Ovary (tissue), 10 donors: ENCODE measurements at regions of chr6 and their contacts with region 1.

Region 1: GRCh38 chr6:16228709-16229665 is 9.4 kb upstream of the GMPR start:
- DNase-seq: peak in 1 of 5 donors; percentile 43
- H3K4me3 ChIP-seq: peak overlapping the region; percentile 15
- H3K27ac ChIP-seq: peak overlapping the region; percentile 31 to 48
- H3K4me1 ChIP-seq: peaks cover 4% of the 10 kb centered on the region
- H3K27me3 ChIP-seq: no peaks in the 10 kb centered on the region
- CTCF ChIP-seq: no peak
- EP300 ChIP-seq: no peak
- POLR2A ChIP-seq: no peak

Region 2: DNA sequence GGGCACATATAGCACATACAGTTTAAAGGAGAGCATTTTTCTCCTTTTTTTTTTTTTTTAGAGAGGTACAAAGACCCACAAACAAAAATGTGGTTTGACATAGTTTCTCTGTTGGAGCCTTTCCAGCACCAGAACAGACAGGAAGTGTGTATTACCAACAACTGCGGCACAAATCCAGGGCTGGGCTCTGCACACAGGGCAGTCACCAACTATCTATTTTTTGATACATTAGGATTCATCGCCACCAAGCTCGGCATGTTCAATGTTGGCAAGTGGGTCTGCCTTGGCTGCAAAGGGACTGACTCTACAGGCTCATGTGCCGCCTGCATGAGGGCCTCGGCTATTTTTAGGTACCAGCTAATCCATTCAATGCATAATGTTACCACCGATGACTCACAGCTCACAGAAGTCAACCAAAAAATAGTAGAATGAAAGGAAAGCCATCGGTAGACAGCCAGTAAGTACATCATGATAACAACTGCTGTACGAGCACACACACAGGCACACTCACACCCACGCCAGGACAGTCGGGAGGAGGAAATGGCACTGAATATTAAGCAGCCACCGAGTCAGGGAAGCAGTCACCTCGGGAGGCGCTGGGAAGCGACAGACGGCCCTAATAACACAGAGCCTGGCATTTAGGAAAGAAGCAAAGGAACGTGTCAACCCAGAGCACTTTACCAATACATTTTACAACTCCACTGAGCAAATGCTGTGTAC is 91.0 kb after region 1 on chr6:
- intact Hi-C with region 1: loop called in 1 of 4 experiments (anchors 10 kb)
- DNase-seq: peak; percentile 47 to 60 (median 54)
- H3K4me3 ChIP-seq: no peak overlapping the region
- H3K27ac ChIP-seq: peak overlapping the region; percentile 19 to 26
- H3K4me1 ChIP-seq: peaks cover 3% of the 10 kb centered on the region
- H3K27me3 ChIP-seq: no peaks in the 10 kb centered on the region
- CTCF ChIP-seq: no peak
- EP300 ChIP-seq: no peak
- POLR2A ChIP-seq: no peak